GM18951 (cell line): ENCODE measurements at regions of chr17 and their contacts with region 1.

Region 1: GRCh38 chr17:73249700-73250099 is 12.0 kb downstream of the CPSF4L start:
- POLR2A ChIP-seq: no peak

Region 2: DNA sequence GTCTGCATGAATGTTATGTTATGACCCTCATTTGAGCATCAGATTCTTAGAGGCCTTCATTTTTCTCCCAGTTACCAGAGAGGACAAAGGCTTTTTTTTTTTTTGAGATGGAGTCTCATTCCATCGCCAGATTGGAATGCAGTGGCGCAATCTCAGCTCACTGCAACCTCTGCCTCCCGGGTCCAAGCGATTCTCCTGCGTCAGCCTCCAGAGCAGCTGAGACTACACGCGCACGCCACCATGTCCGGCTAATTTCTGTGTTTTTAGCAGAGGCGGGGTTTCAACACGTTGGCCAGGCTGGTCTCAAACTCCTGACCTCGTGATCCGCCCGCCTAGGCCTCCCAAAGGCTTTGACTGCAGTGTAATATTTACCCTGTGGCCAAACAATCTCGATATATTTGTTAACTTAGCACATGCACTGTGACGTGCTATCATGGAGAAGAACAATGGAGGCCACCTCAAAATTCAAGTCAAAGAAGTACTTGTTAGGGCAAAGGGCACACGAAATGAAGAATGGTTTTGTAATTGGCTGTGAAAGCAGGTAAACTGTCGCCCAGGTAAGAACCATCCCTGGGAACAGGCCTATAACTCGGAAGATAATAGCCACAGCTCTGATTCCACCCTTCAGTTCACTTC is 460.6 kb before region 1 on chr17:
- in situ Hi-C with region 1: no loop called
- POLR2A ChIP-seq: no peak

Region 3: DNA sequence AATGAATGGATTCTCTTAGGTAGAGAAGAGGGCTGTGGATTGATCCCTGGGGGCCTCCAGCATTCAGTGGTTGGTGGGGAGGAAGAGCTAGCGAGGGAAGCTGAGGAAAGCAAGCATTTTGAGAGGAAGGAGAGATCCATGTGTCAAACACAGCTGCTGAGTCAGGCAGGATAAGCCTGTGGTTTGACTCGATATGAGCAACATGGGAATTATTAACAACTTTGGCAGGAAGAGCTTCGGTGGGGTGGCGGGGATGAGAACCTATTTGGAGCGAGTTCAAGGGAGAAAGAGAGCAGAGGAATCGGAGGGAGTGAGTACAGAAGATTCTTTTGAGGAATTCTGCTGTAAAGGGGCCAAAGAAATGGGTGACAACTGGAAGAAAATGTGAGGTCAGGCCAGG is 121.6 kb after region 1 on chr17:
- in situ Hi-C with region 1: loop called (anchors 5 kb)
- POLR2A ChIP-seq: no peak

Region 4: DNA sequence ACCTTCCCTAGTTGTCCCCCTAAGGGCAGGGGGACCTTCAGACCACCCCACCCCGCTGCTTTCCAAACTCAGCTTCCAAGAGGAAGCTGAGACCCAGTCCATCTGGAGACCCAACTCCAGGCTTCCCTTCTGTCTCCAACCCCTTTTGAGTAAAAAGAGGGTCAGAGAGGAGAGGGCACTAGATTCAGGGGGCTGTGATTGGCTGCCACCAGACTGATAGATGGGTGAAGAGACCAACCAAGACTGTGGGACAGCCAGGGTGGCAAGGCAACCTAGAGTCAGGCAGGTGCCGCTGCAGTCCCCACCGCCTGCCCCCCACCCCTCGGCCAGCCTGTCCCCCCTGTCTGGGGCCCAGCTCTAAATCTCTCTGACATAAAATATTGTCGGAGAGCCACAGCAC is 302.1 kb after region 1 on chr17:
- in situ Hi-C with region 1: no loop called
- POLR2A ChIP-seq: no peak